Transverse colon (tissue), 4 donors: ENCODE measurements at regions of chr3 and their contacts with region 1.

Region 1: GRCh38 chr3:104510131-104510849 is 856.4 kb upstream of the ALCAM start:
- DNase-seq: no peak
- H3K4me3 ChIP-seq: no peak overlapping the region
- H3K27ac ChIP-seq: no peak overlapping the region
- H3K4me1 ChIP-seq: no peaks in the 10 kb centered on the region
- H3K27me3 ChIP-seq: no peaks in the 10 kb centered on the region
- CTCF ChIP-seq: no peak
- EP300 ChIP-seq: no peak
- POLR2A ChIP-seq: no peak

Region 2: GRCh38 chr3:105622169-105622568 is 1111.9 kb after region 1 on chr3:
- in situ Hi-C with region 1: no loop called
- intact Hi-C with region 1: loop called (anchors 5 kb)
- DNase-seq: no peak
- H3K4me3 ChIP-seq: no peak overlapping the region
- H3K27ac ChIP-seq: no peak overlapping the region
- H3K4me1 ChIP-seq: no peaks in the 10 kb centered on the region
- H3K27me3 ChIP-seq: no peaks in the 10 kb centered on the region
- CTCF ChIP-seq: no peak
- EP300 ChIP-seq: no peak
- POLR2A ChIP-seq: no peak